Ascending aorta (tissue), 2 donors: ENCODE measurements at regions of chr11 and their contacts with region 1.

Region 1: DNA sequence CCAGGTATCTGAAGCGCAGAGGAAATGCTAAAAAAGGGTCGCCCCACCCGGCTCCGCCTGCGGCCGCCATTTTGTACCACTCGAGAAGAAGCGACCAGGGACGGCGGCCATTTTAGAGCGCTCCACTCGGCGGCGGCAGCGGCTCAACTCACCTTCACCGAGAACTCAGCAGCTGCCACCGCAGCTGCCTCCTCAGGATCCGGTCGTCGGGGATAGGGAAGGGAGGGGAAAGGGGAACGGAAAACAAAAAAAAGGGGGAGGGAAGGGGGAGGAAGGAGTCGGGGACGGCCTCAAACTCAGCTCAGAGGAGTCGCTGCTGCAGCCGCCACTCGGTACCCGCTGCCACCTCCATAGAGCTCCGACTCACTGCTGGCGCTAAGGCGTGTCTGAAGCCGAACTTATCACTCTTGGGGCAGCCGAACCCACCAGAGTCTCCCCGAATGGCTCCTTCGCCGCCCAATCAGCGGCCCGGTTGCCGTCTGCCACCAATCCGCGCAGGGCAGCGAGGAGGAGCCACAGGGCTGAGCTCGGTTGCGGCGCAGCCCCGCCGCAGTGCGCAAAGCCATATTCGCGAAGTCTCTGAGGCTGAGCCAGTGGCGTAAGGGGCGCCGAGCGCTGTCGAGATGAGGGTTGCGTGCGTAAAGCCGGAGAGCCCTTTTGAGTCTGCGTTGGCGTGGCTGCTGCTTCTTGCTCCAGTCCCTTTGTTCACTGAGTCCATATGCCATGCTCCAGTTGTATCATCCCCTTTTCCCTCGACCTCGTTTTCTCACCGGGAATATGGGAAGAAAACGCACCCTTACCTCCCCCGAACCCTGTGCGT is at the start of gene EIF4G2:
- DNase-seq: peak; percentile 97 to 99
- H3K4me3 ChIP-seq: peak within 1 kb of the TSS; percentile 83 to 99
- H3K27ac ChIP-seq: peak within 1 kb of the TSS; percentile 97 to 99
- H3K4me1 ChIP-seq: peaks cover 0 to 39% of the 10 kb centered on the region in 2 donors
- H3K27me3 ChIP-seq: no peaks in the 10 kb centered on the region
- CTCF ChIP-seq: peak in 1 of 3 experiments; percentile 15
- total RNA-seq, gene EIF4G2: 311 TPM

Region 2: GRCh38 chr11:9573052-9573774 is 1235.5 kb before region 1 on chr11 and contains the start of gene WEE1:
- intact Hi-C with region 1: loop called (anchors 10 kb)
- DNase-seq: peak; percentile 95 to 99
- H3K4me3 ChIP-seq: peak within 1 kb of the TSS; percentile 89 to 98
- H3K27ac ChIP-seq: peak within 1 kb of the TSS; percentile 93 to 98
- H3K4me1 ChIP-seq: peaks cover 16 to 27% of the 10 kb centered on the region in 2 donors
- H3K27me3 ChIP-seq: no peaks in the 10 kb centered on the region
- CTCF ChIP-seq: no peak
- total RNA-seq, gene WEE1: 20.8 TPM

Region 3: DNA sequence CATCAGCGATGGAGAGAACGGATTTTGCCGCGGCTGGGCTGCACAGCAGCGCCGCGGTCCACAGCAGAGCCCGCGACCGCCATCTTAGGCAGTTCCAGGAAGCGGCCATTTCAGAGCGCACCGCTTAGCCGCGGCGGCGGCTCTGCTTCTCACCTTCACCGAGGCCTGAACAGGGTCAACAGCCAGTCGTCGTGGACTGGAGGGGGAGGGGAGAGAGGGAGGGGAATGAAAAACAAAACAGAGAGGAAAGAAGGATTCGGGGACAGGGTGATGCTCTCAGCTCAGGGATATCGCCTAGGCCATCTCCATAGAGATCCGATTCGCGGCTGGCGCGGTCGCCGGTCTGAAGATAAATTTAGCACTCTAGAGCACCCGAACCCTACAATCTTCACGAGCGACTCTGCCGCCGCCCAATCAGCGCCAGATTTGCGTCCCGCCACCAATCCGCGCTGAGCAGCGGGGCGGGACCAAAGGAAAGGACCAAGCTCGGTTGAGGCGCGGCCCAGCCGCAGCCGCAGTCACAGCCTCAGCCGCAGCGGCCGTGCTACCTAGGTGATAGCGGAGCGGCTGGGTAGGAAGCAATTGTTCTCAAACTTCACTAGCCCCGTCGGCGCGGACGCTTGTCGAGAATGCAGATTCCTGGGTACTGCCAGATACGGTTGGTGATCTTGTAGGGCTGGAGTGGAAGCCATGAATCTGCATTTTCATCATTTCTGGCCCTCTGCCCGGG is 49.1 kb after region 1 on chr11 and contains the start of gene ZBED5:
- intact Hi-C with region 1: loop called (anchors 1 kb)
- DNase-seq: peak; percentile 95 to 98
- H3K4me3 ChIP-seq: peak within 1 kb of the TSS; percentile 88 to 92
- H3K27ac ChIP-seq: peak within 1 kb of the TSS; percentile 97 to 99
- H3K4me1 ChIP-seq: peaks cover 6 to 21% of the 10 kb centered on the region in 2 donors
- H3K27me3 ChIP-seq: no peaks in the 10 kb centered on the region
- CTCF ChIP-seq: peak in 2 of 3 experiments; percentile 18 to 38
- total RNA-seq, gene ZBED5: 7.8 TPM

Region 4: DNA sequence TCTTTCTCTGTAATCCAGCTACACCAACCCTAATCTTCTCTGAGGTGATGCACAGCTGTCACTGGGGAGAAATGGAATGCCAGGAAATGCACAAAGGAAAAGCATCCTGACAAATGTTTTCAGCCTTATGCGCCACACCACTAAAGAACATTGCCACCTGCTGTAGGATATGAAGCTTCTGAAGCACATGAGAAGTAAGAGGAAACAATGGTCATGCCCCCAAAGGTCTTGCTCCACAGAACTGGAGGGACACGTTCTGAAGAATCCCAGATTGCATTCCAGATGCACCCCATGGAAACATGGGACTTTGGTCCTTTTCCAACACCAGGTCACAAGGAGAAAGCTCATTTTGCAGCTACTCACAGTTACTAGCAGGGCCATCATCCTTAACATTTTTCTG is 97.8 kb after region 1 on chr11:
- intact Hi-C with region 1: loop called (anchors 10 kb)
- DNase-seq: no peak
- H3K4me3 ChIP-seq: no peak overlapping the region
- H3K27ac ChIP-seq: no peak overlapping the region
- H3K4me1 ChIP-seq: peaks cover 0 to under 1% of the 10 kb centered on the region in 2 donors
- H3K27me3 ChIP-seq: no peaks in the 10 kb centered on the region
- CTCF ChIP-seq: peak in 1 of 3 experiments; percentile 20

Region 5: DNA sequence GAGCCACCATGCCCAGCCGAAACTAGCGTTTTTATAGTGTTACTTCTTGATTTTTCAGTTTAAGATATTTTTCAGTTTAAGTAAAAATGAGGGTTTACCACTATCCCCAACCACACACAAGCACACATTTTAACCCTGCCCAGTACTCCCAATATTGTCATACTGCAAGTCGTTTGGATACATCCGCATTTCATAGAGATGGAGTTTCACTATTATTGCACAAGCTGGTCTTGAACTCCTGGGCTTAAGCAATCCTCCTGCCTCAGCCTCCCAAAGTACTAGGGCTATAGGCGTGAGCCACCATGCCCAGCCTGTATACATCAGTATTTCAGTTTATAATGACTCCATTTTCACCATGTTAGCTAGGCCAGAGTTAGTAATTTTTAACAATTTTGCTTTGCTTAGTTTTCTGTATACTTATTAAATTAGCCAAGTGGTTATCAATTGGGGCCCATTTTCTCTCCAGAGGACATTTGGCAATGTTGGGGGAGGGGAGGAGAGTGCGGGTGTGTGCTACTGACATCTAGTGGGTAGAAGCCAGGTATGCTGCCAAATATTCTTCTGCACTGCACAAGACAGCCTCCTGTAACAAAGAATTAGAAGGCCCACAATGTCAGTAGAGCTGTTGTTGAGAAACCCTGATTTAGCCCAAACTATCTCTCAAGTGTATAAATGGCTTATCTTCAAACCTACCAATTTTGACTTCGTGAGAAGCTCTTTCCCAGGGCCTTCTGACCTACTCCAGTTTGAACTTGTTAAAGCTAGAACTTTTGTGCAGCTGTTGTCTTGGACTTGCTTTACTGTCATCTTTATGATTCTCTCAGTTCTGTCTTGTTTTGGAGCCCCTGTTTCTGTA is 1040.4 kb after region 1 on chr11:
- intact Hi-C with region 1: loop called (anchors 5 kb)
- DNase-seq: peak in 1 of 2 donors; percentile 69
- H3K4me3 ChIP-seq: no peak overlapping the region
- H3K27ac ChIP-seq: peak overlapping the region; percentile 6 to 34
- H3K4me1 ChIP-seq: peaks cover 20 to 65% of the 10 kb centered on the region in 2 donors
- H3K27me3 ChIP-seq: no peaks in the 10 kb centered on the region
- CTCF ChIP-seq: peak; percentile 8 to 52 (median 25)